Dendritic cell treated with granulocyte-macrophage colony-stimulating factor and Interleukin-4, amounts not matched to agents 40 ng/mL and 50 ng/mL, for 4 days (primary cell): ENCODE measurements at regions of chr3 and their contacts with region 1.

Region 1: GRCh38 chr3:38479431-38480092 is 16.6 kb upstream of the EXOG start:
- H3K4me3 Mint-ChIP-seq: no peak overlapping the region
- H3K27ac Mint-ChIP-seq: no peak overlapping the region
- H3K4me1 Mint-ChIP-seq: no peaks in the 10 kb centered on the region
- H3K27me3 Mint-ChIP-seq: no peaks in the 10 kb centered on the region

Region 2: DNA sequence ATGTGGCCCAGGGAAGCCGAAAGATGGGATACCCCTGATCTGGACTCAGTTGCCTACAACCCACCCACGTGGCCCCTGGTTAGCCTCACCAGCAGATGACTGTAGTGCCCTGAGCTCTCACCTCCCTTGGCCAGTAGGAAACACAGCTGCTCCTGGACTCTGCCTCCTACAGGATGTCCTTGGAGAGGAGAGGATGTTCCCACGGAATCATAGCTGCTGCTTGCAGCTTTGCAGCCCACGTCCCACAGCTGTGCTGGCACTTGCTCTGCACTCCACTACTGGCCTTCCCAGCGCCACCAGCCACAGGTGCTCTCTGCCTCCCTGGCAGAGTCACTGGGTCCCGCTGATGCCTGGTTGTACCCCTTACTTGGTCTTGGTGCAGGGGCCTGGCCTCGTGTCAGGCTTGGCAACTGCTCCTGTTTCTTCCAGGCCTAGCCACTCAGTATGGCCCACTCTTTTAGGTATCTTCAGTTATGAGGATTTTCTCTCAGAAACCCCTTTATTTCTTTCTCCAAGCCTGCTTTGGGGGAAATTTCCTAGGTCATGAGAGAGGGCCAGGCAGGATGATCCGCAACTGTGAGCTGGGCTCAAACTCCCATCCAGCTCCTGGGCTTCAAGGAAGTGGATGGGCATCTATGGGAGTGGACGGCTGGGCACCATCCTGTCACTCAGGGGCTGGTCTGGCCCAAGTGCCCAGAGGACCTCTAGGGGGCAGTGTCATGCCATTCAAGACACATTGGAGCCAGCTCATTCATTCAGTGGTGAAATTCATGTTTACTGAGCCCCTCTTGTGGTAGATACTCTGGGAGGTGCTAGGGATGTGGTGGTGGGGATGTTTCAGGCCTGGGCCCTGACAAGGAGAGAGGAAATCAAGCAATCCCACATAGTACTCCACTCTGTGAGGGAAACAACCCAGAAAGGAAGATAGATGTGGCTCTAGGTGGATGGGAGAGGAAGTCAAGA is 505.2 kb before region 1 on chr3:
- intact Hi-C with region 1: loop called (anchors 10 kb)
- H3K4me3 Mint-ChIP-seq: no peak overlapping the region
- H3K27ac Mint-ChIP-seq: no peak overlapping the region
- H3K4me1 Mint-ChIP-seq: peaks cover 18% of the 10 kb centered on the region
- H3K27me3 Mint-ChIP-seq: no peaks in the 10 kb centered on the region

Region 3: GRCh38 chr3:38117748-38118420 is 361.7 kb before region 1 on chr3:
- intact Hi-C with region 1: loop called (anchors 5 kb)
- H3K4me3 Mint-ChIP-seq: no peak overlapping the region
- H3K27ac Mint-ChIP-seq: no peak overlapping the region
- H3K4me1 Mint-ChIP-seq: peaks cover 5% of the 10 kb centered on the region
- H3K27me3 Mint-ChIP-seq: no peaks in the 10 kb centered on the region

Region 4: DNA sequence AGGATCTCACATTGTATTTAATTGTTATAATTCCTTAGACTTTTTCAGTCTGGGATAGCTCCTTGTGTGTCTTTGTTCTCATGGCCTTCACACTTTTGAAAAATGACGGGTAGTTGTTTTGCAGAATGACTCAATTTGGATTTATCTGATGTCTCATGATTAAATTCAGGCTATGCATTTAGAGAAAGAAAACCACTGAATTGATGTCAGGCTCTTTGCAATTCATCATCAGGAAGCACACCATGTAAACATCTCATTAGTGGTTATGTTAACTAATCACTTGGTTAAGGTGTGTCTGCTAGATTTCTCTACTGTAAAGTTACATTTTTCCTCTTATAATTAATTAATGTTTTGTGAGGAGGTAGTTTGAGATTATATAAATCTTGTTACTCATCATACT is 222.0 kb before region 1 on chr3:
- intact Hi-C with region 1: loop called (anchors 10 kb)
- H3K4me3 Mint-ChIP-seq: no peak overlapping the region
- H3K27ac Mint-ChIP-seq: no peak overlapping the region
- H3K4me1 Mint-ChIP-seq: no peaks in the 10 kb centered on the region
- H3K27me3 Mint-ChIP-seq: no peaks in the 10 kb centered on the region

Region 5: GRCh38 chr3:38346587-38347410 is 132.8 kb before region 1 on chr3 and contains the start of gene XYLB:
- intact Hi-C with region 1: loop called (anchors 1 kb)
- H3K4me3 Mint-ChIP-seq: peak within 1 kb of the TSS; percentile 76
- H3K27ac Mint-ChIP-seq: peak within 1 kb of the TSS; percentile 63
- H3K4me1 Mint-ChIP-seq: peaks cover 6% of the 10 kb centered on the region
- H3K27me3 Mint-ChIP-seq: peaks cover 2% of the 10 kb centered on the region